Activated CD8-positive, alpha-beta memory T cell treated with anti-CD3 and anti-CD28 coated beads, Interleukin-2, amount 10 ng/mL, durations not matched to agents 7 days and 5 days (primary cell): ENCODE measurements at regions of chr14 and their contacts with region 1.

Region 1: GRCh38 chr14:93939304-93940229 is 12.4 kb downstream of the FAM181A start:
- DNase-seq: peak; percentile 92
- ATAC-seq: peak; percentile 97
- H3K4me3 Mint-ChIP-seq: peak overlapping the region; percentile 46
- H3K27ac Mint-ChIP-seq: peak overlapping the region; percentile 74
- H3K4me1 Mint-ChIP-seq: peaks cover 32% of the 10 kb centered on the region
- H3K27me3 Mint-ChIP-seq: no peaks in the 10 kb centered on the region

Region 2: GRCh38 chr14:93926873-93927799 is 12.4 kb before region 1 on chr14 and contains the start of gene FAM181A:
- CTCF ChIA-PET with region 1: interaction called, 17 read pairs
- DNase-seq: no peak
- ATAC-seq: no peak
- H3K4me3 Mint-ChIP-seq: no peak within 1 kb of the TSS
- H3K27ac Mint-ChIP-seq: no peak within 1 kb of the TSS
- H3K4me1 Mint-ChIP-seq: no peaks in the 10 kb centered on the region
- H3K27me3 Mint-ChIP-seq: no peaks in the 10 kb centered on the region
- total RNA-seq, gene FAM181A: not detected

Region 3: GRCh38 chr14:93984987-93985410 is 45.4 kb after region 1 on chr14:
- CTCF ChIA-PET with region 1: interaction called, 307 read pairs
- DNase-seq: no peak
- ATAC-seq: peak; percentile 14
- H3K4me3 Mint-ChIP-seq: no peak overlapping the region
- H3K27ac Mint-ChIP-seq: no peak overlapping the region
- H3K4me1 Mint-ChIP-seq: peaks cover 9% of the 10 kb centered on the region
- H3K27me3 Mint-ChIP-seq: no peaks in the 10 kb centered on the region

Region 4: DNA sequence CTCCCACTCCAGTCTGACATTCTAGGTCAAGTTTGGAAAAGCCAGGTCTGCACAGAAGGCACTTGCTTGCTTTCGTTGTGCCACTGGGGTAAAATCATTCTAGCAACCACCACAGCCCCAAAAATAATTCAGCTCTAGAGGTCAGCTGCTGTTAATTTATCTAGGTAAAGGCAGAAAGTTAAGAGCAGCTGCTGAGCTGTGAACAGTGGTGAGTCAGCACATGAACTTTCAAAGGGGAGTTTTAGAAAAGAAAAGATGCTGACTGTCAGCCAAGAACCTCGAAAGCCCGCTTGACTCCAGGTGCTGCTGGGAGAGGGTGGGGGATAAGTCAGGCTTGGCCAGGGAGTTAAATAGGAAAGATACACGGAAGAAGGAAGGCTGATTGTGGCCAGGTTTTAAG is 70.2 kb after region 1 on chr14:
- CTCF ChIA-PET with region 1: interaction called, 297 read pairs
- DNase-seq: no peak
- ATAC-seq: no peak
- H3K4me3 Mint-ChIP-seq: no peak overlapping the region
- H3K27ac Mint-ChIP-seq: peak overlapping the region; percentile 79
- H3K4me1 Mint-ChIP-seq: peaks cover 57% of the 10 kb centered on the region
- H3K27me3 Mint-ChIP-seq: no peaks in the 10 kb centered on the region

Region 5: DNA sequence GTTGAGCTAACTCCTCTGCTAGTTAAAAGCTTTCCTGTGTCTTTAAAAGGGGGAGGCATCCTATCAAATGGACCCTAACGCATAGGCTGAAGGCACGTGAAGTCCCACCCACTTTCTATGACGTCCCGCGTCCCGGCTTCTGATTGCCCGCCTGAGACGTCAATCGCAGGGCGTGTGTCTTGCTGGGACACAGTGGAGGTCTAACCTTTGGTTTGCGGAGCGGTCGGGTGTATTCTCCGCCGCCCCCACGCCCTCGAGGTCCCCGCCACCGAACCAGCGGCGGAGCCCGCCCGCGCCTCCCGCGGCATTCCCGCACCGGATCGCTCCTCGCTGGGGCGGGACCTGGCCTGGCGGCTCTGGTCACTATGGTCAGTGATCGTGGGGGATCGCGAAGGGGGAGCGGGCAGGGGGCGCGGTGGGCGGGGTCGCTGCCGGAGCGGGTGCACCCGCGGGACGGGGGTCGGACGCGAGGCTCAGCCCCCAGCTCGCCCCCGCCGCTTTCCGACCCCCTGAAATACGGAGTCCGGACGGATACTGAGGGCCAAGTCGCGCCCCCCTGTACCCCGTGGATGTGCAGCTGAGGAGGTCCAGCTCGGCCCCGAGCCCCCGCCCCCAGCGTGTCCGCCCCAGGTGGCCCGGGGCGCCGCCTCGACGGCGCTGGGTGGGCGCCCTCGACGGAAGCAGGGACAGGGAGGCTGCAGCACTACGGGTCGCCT is 86.8 kb after region 1 on chr14 and contains the start of gene OTUB2:
- CTCF ChIA-PET with region 1: interaction called, 87 read pairs
- DNase-seq: peak; percentile 99
- ATAC-seq: peak; percentile 98
- H3K4me3 Mint-ChIP-seq: peak within 1 kb of the TSS; percentile 64
- H3K27ac Mint-ChIP-seq: peak within 1 kb of the TSS; percentile 65
- H3K4me1 Mint-ChIP-seq: peaks cover 56% of the 10 kb centered on the region
- H3K27me3 Mint-ChIP-seq: no peaks in the 10 kb centered on the region
- total RNA-seq, gene OTUB2: 3.4 to 4.2 TPM

Region 6: GRCh38 chr14:94080471-94081289 is 141.1 kb after region 1 on chr14 and contains the start of gene DDX24:
- CTCF ChIA-PET with region 1: interaction called, 22 read pairs
- DNase-seq: peak; percentile 98
- ATAC-seq: peak; percentile 97
- H3K4me3 Mint-ChIP-seq: peak within 1 kb of the TSS; percentile 95
- H3K27ac Mint-ChIP-seq: peak within 1 kb of the TSS; percentile 98
- H3K4me1 Mint-ChIP-seq: peaks cover 58% of the 10 kb centered on the region
- H3K27me3 Mint-ChIP-seq: no peaks in the 10 kb centered on the region
- total RNA-seq, gene DDX24: 211 to 244 TPM

Region 7: GRCh38 chr14:94143239-94143638 is 203.7 kb after region 1 on chr14:
- CTCF ChIA-PET with region 1: interaction called, 30 read pairs
- DNase-seq: no peak
- ATAC-seq: no peak
- H3K4me3 Mint-ChIP-seq: no peak overlapping the region
- H3K27ac Mint-ChIP-seq: no peak overlapping the region
- H3K4me1 Mint-ChIP-seq: peaks cover 25% of the 10 kb centered on the region
- H3K27me3 Mint-ChIP-seq: peaks cover 4% of the 10 kb centered on the region